ENCODE measurements at regions of chrX and their contacts with region 1.

Region 1: DNA sequence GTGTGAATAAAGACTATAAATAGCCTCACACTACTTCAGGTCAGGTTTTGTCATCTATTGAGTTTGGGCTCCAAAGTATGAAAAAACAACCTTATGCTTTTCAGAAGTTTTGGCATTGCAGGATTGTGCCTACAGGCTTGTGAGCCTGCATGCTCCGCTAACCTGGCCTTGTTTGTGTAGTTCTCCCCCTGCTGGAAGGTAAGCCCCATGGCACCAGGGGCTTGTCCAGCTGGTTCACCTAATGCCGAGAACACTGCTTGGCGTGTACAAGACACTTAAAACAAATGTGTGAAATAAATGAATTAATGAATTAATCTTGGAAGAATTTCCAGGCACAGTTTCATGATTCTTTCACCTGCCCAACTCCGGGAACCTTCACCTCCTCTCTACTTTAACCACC is 1.8 kb upstream of the HSD17B10 start:
- DNase-seq: peak; percentile 56 to 68
- H3K4me3 ChIP-seq: no peak overlapping the region
- H3K27ac ChIP-seq: no peak overlapping the region
- H3K4me1 ChIP-seq: peaks cover 0 to 4% of the 10 kb centered on the region in 2 donors
- H3K27me3 ChIP-seq: no peaks in the 10 kb centered on the region
- CTCF ChIP-seq: peak; percentile 30 to 81 (median 61)
- POLR2A ChIP-seq: no peak

Region 2: DNA sequence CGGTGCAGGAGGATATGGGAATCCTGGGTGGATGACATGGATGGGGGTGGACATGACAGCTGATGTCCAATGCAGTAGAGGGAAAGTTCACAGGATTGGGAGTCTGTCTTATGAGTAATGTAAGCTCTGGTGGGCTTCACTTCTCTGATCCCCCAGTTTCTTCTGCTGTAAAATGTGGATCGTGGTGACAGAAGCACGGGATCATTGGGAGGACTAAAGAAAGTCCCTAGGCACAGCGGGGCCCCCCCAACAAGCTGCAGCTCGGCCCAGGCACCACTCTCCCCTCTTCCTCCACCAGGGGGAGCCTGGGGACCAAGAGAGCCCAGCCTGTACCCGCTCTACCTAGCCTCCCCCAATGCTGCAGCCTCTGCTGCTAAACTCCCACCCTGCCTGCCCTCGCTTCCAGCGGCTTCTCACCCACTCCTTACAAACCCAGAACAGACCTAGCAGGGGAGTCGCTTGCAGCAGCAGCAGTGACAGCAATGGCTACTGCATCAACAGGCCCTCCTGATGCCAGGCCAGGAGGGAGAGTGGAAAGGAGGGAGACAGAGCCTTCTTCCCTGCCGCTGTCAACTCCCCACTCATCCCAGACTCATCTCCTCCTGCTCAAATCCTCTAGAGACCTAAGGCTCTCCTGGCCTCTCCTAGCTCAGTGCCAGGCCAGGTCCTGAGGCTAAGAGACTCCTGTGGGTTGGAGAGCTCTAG is 118.5 kb before region 1 on chrX:
- intact Hi-C with region 1: loop called (anchors 5 kb)
- DNase-seq: peak; percentile 61
- H3K4me3 ChIP-seq: no peak overlapping the region
- H3K27ac ChIP-seq: no peak overlapping the region
- H3K4me1 ChIP-seq: peaks cover 0 to 8% of the 10 kb centered on the region in 2 donors
- H3K27me3 ChIP-seq: no peaks in the 10 kb centered on the region
- CTCF ChIP-seq: peak; percentile 37 to 71 (median 54)
- POLR2A ChIP-seq: no peak

Region 3: GRCh38 chrX:53544940-53545339 is 108.9 kb after region 1 on chrX:
- intact Hi-C with region 1: no loop called
- DNase-seq: no peak
- H3K4me3 ChIP-seq: no peak overlapping the region
- H3K27ac ChIP-seq: no peak overlapping the region
- H3K4me1 ChIP-seq: no peaks in the 10 kb centered on the region
- H3K27me3 ChIP-seq: no peaks in the 10 kb centered on the region
- CTCF ChIP-seq: no peak
- POLR2A ChIP-seq: no peak

Measured in thyroid gland (tissue), 4 donors.